ENCODE measurements at regions of chr7 and their contacts with region 1.

Region 1: GRCh38 chr7:104883718-104884452 is 130.1 kb upstream of the KMT2E start:
- DNase-seq: peak; percentile 76
- H3K4me3 Mint-ChIP-seq: no peak overlapping the region
- H3K27ac Mint-ChIP-seq: no peak overlapping the region
- H3K4me1 Mint-ChIP-seq: peaks cover 17% of the 10 kb centered on the region
- H3K27me3 Mint-ChIP-seq: peaks cover 9% of the 10 kb centered on the region

Region 2: GRCh38 chr7:104855861-104856260 is 28.0 kb before region 1 on chr7:
- CTCF ChIA-PET with region 1: interaction called, 11 read pairs
- DNase-seq: no peak
- H3K4me3 Mint-ChIP-seq: no peak overlapping the region
- H3K27ac Mint-ChIP-seq: no peak overlapping the region
- H3K4me1 Mint-ChIP-seq: peaks cover 13% of the 10 kb centered on the region
- H3K27me3 Mint-ChIP-seq: peaks cover 13% of the 10 kb centered on the region

Region 3: DNA sequence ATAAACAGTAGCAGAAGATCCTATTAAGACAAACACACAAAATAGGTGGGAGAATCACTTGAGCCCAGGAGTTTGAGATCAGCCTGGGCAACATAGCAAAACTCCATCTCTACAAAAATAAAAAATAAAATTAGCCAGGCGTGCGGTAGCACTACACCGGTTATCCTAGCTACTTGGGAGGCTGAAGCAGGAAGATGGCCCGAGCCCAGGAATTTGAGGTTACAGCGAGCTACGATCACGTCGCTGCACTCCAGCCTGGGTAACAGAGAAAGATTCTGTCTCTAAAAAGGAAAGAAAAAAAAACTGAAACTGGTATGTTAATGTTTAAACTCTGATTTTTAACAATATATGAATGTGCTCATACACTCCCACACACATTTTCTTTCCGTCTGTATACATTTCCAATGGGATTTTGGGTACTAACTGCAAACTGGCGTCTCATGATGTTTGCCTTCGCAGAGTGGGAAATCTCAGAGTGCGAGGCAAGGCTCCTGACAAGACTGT is 10.5 kb before region 1 on chr7:
- CTCF ChIA-PET with region 1: interaction called, 11 read pairs
- DNase-seq: no peak
- H3K4me3 Mint-ChIP-seq: no peak overlapping the region
- H3K27ac Mint-ChIP-seq: no peak overlapping the region
- H3K4me1 Mint-ChIP-seq: peaks cover 3% of the 10 kb centered on the region
- H3K27me3 Mint-ChIP-seq: peaks cover 3% of the 10 kb centered on the region

Region 4: DNA sequence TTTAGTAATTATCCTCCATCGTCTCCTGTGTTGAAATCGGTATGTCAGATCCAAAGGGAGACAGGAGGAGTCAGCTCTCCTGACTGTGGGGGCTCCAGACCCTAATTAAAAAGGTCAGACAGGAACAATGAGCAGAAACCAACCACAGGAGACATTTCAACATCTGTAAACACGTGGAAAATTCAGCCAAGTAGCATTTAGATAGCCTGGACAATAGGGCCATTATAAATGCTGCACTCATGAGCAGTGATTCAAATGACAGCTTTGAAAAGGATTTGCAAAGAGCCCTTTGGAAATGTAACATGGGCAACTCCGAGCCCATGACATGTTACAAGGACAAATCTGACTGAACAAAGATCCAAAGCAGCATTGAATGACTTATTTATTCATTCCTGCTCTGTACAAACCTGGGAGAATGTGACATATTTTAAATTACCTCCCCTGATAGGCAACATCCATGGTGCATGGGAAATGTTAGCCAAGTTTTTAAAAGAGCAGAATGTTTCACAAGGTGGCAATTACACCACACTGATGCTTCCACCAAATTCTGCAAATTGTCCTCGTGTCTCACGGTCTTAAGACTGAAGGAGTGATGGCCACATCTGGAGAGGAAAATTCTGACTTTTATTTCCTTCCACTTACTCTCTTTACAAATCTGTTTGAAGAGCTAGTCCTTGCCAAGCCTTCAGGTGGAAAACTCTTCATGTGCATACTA is 16.8 kb after region 1 on chr7:
- CTCF ChIA-PET with region 1: interaction called, 29 read pairs
- DNase-seq: no peak
- H3K4me3 Mint-ChIP-seq: no peak overlapping the region
- H3K27ac Mint-ChIP-seq: no peak overlapping the region
- H3K4me1 Mint-ChIP-seq: peaks cover 7% of the 10 kb centered on the region
- H3K27me3 Mint-ChIP-seq: peaks cover 6% of the 10 kb centered on the region

Region 5: GRCh38 chr7:104914421-104914820 is 30.5 kb after region 1 on chr7:
- CTCF ChIA-PET with region 1: interaction called, 101 read pairs
- DNase-seq: no peak
- H3K4me3 Mint-ChIP-seq: no peak overlapping the region
- H3K27ac Mint-ChIP-seq: no peak overlapping the region
- H3K4me1 Mint-ChIP-seq: no peaks in the 10 kb centered on the region
- H3K27me3 Mint-ChIP-seq: peaks cover 20% of the 10 kb centered on the region

Measured in activated naive CD4-positive, alpha-beta T cell treated with anti-CD3 and anti-CD28 coated beads, Interleukin-2, amount 10 ng/mL, durations not matched to agents 7 days and 5 days (primary cell).